ENCODE measurements at regions of chr20 and their contacts with region 1.

Region 1: DNA sequence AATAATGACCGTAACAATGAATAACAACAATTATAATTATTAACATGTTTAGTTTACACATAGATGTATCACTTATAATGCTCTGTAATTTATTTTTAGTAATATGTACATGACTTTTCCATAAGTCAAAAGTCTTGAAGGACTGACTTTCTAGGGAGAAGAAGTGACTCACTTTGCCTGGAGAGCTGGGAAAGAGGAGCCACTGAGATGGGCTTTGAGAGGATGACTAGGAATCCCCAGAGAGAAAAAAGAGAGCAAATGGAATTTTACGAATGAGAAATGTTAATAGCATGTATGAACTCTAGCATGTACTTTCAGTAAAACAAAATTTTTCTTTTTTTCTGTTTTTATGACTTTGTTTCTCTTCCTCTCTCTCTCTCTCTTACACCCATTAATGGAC is 67.8 kb upstream of the RALY start:
- DNase-seq: no peak
- H3K4me3 ChIP-seq: no peak overlapping the region
- H3K27ac ChIP-seq: no peak overlapping the region
- H3K4me1 ChIP-seq: no peaks in the 10 kb centered on the region
- H3K27me3 ChIP-seq: no peaks in the 10 kb centered on the region
- CTCF ChIP-seq: no peak
- POLR2A ChIP-seq: no peak

Region 2: GRCh38 chr20:33731693-33732165 is 194.1 kb before region 1 on chr20 and contains the start of gene ZNF341:
- intact Hi-C with region 1: no loop called
- DNase-seq: peak; percentile 54
- H3K4me3 ChIP-seq: peak within 1 kb of the TSS; percentile 51 to 82 (median 62)
- H3K27ac ChIP-seq: peak within 1 kb of the TSS; percentile 92 to 97 (median 95)
- H3K4me1 ChIP-seq: peaks cover 23 to 31% (median 25%) of the 10 kb centered on the region in 3 donors
- H3K27me3 ChIP-seq: no peaks in the 10 kb centered on the region
- CTCF ChIP-seq: peak; percentile 81 to 95 (median 90)
- POLR2A ChIP-seq: peak in 1 of 4 donors; percentile 27
- total RNA-seq, gene ZNF341: 1.7 to 4.0 (median 3.2) TPM

Region 3: DNA sequence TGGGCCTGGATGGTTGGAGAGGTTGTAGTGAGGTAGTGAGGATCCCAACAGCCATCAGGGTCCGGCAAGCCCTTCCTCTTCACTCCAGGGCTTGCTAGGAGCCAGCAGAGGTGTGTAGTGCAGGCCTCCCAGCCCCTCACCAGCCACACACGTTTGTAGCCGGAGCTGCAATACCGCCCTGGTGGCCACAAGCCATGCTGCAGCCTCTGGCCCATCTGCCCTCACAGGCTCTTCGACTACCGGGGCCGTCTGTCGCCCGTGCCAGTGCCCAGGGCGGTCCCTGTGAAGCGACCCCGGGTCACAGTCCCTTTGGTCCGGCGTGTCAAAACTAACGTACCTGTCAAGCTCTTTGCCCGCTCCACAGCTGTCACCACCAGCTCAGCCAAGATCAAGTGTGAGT is 149.8 kb after region 1 on chr20:
- intact Hi-C with region 1: loop called (anchors 5 kb)
- DNase-seq: no peak
- H3K4me3 ChIP-seq: no peak overlapping the region
- H3K27ac ChIP-seq: no peak overlapping the region
- H3K4me1 ChIP-seq: no peaks in the 10 kb centered on the region
- H3K27me3 ChIP-seq: no peaks in the 10 kb centered on the region
- CTCF ChIP-seq: peak in 1 of 6 experiments; percentile 16
- POLR2A ChIP-seq: no peak